CD8-positive, alpha-beta T cell (primary cell): ENCODE measurements at regions of chrX and their contacts with region 1.

Region 1: DNA sequence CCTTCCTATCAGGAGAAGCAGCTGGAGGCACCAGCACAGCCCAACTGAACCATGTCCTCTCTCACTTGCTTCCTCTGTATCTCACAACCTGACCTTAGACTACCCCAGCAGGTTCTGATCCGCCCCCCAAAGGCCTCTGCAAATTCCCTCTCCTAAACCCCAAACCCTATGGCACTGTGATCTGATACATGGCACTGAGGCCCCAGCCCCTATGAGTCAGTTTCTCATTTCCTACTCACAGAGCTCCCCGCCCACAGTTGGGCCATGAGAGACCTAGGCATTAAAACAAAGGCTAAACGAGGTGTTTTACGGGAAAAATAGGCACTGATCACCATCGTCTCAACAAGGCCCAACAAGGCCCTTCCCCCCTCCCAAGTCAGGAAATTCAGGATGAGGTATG is 19.1 kb downstream of the SASH3 start:
- DNase-seq: no peak
- ATAC-seq: no peak
- H3K4me3 ChIP-seq: no peak overlapping the region
- H3K4me3 Mint-ChIP-seq: no peak overlapping the region
- H3K27ac ChIP-seq: peak overlapping the region in 1 of 2 experiments; percentile 28
- H3K27ac Mint-ChIP-seq: peak overlapping the region; percentile 77
- H3K4me1 ChIP-seq: peaks cover 5% of the 10 kb centered on the region
- H3K4me1 Mint-ChIP-seq: peaks cover 26% of the 10 kb centered on the region
- H3K27me3 ChIP-seq: no peaks in the 10 kb centered on the region
- H3K27me3 Mint-ChIP-seq: no peaks in the 10 kb centered on the region
- CTCF ChIP-seq: no peak

Region 2: DNA sequence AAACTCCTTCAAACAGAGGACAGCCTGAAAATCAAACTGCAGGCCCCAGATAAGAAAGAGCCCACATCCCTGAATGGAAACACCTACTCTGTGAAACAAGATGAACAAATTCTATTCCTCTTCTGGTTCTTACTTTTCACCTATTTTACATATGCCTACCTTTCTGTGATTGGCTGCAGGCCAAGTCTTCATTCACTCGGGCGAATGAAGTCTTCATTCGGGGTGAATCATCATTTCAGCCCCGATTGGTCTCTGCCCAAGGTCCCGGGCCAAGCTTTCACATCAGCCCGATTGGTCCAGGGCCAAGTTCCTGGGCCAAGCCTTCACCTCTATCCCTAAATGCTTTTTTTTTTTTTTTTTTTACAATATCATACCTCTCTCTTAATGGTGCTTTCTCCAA is 1216.9 kb before region 1 on chrX:
- CTCF ChIA-PET with region 1: no interaction called
- POLR2A ChIA-PET with region 1: no interaction called
- intact Hi-C with region 1: no loop called
- DNase-seq: no peak
- ATAC-seq: no peak
- H3K4me3 ChIP-seq: no peak overlapping the region
- H3K4me3 Mint-ChIP-seq: no peak overlapping the region
- H3K27ac ChIP-seq: no peak overlapping the region
- H3K27ac Mint-ChIP-seq: no peak overlapping the region
- H3K4me1 ChIP-seq: no peaks in the 10 kb centered on the region
- H3K4me1 Mint-ChIP-seq: no peaks in the 10 kb centered on the region
- H3K27me3 ChIP-seq: no peaks in the 10 kb centered on the region
- H3K27me3 Mint-ChIP-seq: no peaks in the 10 kb centered on the region
- CTCF ChIP-seq: no peak

Region 3: GRCh38 chrX:129737916-129738315 is 61.0 kb before region 1 on chrX:
- CTCF ChIA-PET with region 1: no interaction called
- POLR2A ChIA-PET with region 1: no interaction called
- intact Hi-C with region 1: loop called in 1 of 2 experiments (anchors 5 kb)
- DNase-seq: no peak
- ATAC-seq: no peak
- H3K4me3 ChIP-seq: no peak overlapping the region
- H3K4me3 Mint-ChIP-seq: no peak overlapping the region
- H3K27ac ChIP-seq: no peak overlapping the region
- H3K27ac Mint-ChIP-seq: no peak overlapping the region
- H3K4me1 ChIP-seq: peaks cover 17% of the 10 kb centered on the region
- H3K4me1 Mint-ChIP-seq: peaks cover 22% of the 10 kb centered on the region
- H3K27me3 ChIP-seq: no peaks in the 10 kb centered on the region
- H3K27me3 Mint-ChIP-seq: no peaks in the 10 kb centered on the region
- CTCF ChIP-seq: no peak

Region 4: GRCh38 chrX:130028196-130028595 is 229.3 kb after region 1 on chrX:
- CTCF ChIA-PET with region 1: no interaction called
- POLR2A ChIA-PET with region 1: no interaction called
- intact Hi-C with region 1: no loop called
- DNase-seq: peak; percentile 7 to 65 (median 56)
- ATAC-seq: no peak
- H3K4me3 ChIP-seq: no peak overlapping the region
- H3K4me3 Mint-ChIP-seq: no peak overlapping the region
- H3K27ac ChIP-seq: no peak overlapping the region
- H3K27ac Mint-ChIP-seq: no peak overlapping the region
- H3K4me1 ChIP-seq: peaks cover 7% of the 10 kb centered on the region
- H3K4me1 Mint-ChIP-seq: peaks cover 13% of the 10 kb centered on the region
- H3K27me3 ChIP-seq: no peaks in the 10 kb centered on the region
- H3K27me3 Mint-ChIP-seq: no peaks in the 10 kb centered on the region
- CTCF ChIP-seq: peak; percentile 57